GM12878 (cell line): ENCODE measurements at regions of chr13 and their contacts with region 1.

Region 1: GRCh38 chr13:32650705-32651311 is 64.6 kb downstream of the PDS5B start:
- DNase-seq: peak; percentile 30
- ATAC-seq: peak; percentile 84
- H3K4me3 ChIP-seq: no peak overlapping the region
- H3K27ac ChIP-seq: no peak overlapping the region; the same call in 1 of the 2 replicates
- H3K4me1 ChIP-seq: peaks cover 20% of the 10 kb centered on the region
- H3K27me3 ChIP-seq: no peaks in the 10 kb centered on the region
- CTCF ChIP-seq: peak; percentile 78 to 88 (median 83)
- EP300 ChIP-seq: no peak
- POLR2A ChIP-seq: no peak
- RAD21 ChIP-seq: peak; percentile 71

Region 2: DNA sequence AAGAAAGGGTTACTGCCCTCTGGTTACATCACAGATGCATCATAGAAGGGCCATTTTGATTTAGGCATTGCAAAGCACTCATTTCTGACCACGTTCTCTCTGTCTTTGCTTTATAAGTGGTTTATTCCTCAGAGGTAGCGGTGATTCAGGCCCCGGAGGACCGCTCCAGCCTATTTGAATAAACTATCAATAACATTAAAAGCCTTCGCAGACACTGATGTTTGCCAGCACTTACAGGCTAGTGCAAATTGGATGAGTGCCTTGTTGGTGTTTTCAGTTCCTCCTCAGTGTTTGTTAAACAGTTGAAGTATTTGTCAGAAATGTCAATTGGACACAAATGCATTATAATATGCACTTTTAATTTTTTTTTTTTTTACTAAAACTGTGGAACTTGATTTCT is 791.2 kb before region 1 on chr13:
- CTCF ChIA-PET with region 1: no interaction called
- POLR2A ChIA-PET with region 1: no interaction called
- RAD21 ChIA-PET with region 1: no interaction called
- SMC1A ChIA-PET with region 1: no interaction called
- in situ Hi-C with region 1: no loop called
- intact Hi-C with region 1: no loop called
- DNase-seq: no peak
- ATAC-seq: peak; percentile 73
- H3K4me3 ChIP-seq: no peak overlapping the region
- H3K27ac ChIP-seq: no peak overlapping the region
- H3K4me1 ChIP-seq: no peaks in the 10 kb centered on the region
- H3K27me3 ChIP-seq: no peaks in the 10 kb centered on the region
- CTCF ChIP-seq: no peak
- EP300 ChIP-seq: no peak; a peak in 1 of 4 replicates
- POLR2A ChIP-seq: no peak
- RAD21 ChIP-seq: no peak

Region 3: DNA sequence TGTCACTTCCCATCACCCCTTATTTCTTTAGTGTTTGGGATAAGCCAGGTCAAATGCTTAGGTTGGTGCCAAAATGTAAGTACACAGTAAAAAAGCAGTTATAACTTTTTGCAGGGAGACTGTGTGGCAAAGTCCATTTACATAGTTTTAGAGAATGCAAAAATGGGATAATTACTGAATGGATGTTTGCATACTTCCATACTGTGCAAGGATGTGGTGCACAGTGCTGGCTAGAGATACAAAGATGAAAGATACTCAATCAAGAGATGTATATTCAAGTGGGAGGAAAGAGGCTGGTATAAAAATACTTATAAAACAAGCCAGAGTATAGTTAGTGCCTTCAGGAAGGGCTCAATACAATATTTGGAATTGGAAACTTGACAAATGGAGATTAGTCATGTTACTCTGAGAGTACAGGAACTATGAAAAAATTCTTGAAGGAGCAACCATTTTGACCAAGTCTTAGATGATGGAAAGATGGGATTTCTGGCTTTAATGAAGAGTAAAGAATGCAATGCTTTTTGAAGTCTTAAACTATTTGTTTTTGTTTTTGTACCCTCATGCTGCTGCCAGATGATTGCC is 56.6 kb before region 1 on chr13:
- CTCF ChIA-PET with region 1: interaction called, 171 read pairs
- POLR2A ChIA-PET with region 1: interaction called, 3 read pairs
- RAD21 ChIA-PET with region 1: interaction called, 112 read pairs
- SMC1A ChIA-PET with region 1: interaction called, 111 read pairs
- in situ Hi-C with region 1: no loop called
- intact Hi-C with region 1: no loop called
- DNase-seq: no peak
- ATAC-seq: no peak
- H3K4me3 ChIP-seq: no peak overlapping the region
- H3K27ac ChIP-seq: no peak overlapping the region
- H3K4me1 ChIP-seq: no peaks in the 10 kb centered on the region
- H3K27me3 ChIP-seq: no peaks in the 10 kb centered on the region
- CTCF ChIP-seq: no peak
- EP300 ChIP-seq: no peak
- POLR2A ChIP-seq: no peak
- RAD21 ChIP-seq: no peak

Region 4: DNA sequence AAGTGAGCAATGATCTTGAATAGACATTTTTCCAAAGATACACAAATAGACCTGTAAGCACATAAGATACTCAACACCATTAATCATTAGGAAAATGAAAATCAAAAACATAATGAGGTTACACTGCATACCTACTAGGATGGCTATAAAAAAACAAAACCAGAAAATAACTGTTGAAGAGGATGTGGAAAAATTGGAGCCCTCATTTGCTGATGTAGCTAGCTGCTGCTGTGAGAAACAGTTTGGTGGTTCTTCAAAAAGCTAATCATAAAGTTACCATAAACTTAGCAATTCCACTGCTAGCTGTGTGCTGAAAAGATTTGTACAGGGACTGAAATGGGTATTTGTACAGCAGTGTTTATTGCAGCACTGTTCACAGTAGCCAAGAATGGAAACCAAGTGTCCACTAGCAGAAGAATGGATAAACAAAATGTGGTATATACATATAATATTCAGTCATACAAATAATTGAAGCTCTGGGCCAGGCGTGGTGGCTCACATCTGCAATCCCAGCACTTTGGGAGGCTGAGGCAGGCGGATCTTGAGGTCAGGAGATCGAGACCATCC is 18.4 kb before region 1 on chr13:
- CTCF ChIA-PET with region 1: interaction called, 16 read pairs
- POLR2A ChIA-PET with region 1: interaction called, 3 read pairs
- RAD21 ChIA-PET with region 1: interaction called, 8 read pairs
- SMC1A ChIA-PET with region 1: interaction called, 5 read pairs
- in situ Hi-C with region 1: no loop called
- intact Hi-C with region 1: no loop called
- DNase-seq: no peak
- ATAC-seq: no peak
- H3K4me3 ChIP-seq: no peak overlapping the region
- H3K27ac ChIP-seq: no peak overlapping the region
- H3K4me1 ChIP-seq: no peaks in the 10 kb centered on the region
- H3K27me3 ChIP-seq: no peaks in the 10 kb centered on the region
- CTCF ChIP-seq: no peak
- EP300 ChIP-seq: no peak
- POLR2A ChIP-seq: no peak
- RAD21 ChIP-seq: no peak

Region 5: GRCh38 chr13:32639502-32640105 is 11.2 kb before region 1 on chr13:
- CTCF ChIA-PET with region 1: interaction called, 76 read pairs
- POLR2A ChIA-PET with region 1: no interaction called
- RAD21 ChIA-PET with region 1: interaction called, 30 read pairs
- SMC1A ChIA-PET with region 1: interaction called, 25 read pairs
- in situ Hi-C with region 1: no loop called
- intact Hi-C with region 1: no loop called
- DNase-seq: peak; percentile 15
- ATAC-seq: peak; percentile 91
- H3K4me3 ChIP-seq: no peak overlapping the region
- H3K27ac ChIP-seq: no peak overlapping the region
- H3K4me1 ChIP-seq: peaks cover 9% of the 10 kb centered on the region
- H3K27me3 ChIP-seq: no peaks in the 10 kb centered on the region
- CTCF ChIP-seq: peak; percentile 74 to 83 (median 75)
- EP300 ChIP-seq: no peak
- POLR2A ChIP-seq: no peak
- RAD21 ChIP-seq: peak; percentile 73

Region 6: GRCh38 chr13:32669030-32669646 is 18.3 kb after region 1 on chr13:
- CTCF ChIA-PET with region 1: interaction called, 90 read pairs
- POLR2A ChIA-PET with region 1: no interaction called
- RAD21 ChIA-PET with region 1: interaction called, 4 read pairs
- SMC1A ChIA-PET with region 1: interaction called, 31 read pairs
- in situ Hi-C with region 1: no loop called
- intact Hi-C with region 1: no loop called
- DNase-seq: no peak
- ATAC-seq: peak; percentile 78
- H3K4me3 ChIP-seq: no peak overlapping the region
- H3K27ac ChIP-seq: no peak overlapping the region
- H3K4me1 ChIP-seq: no peaks in the 10 kb centered on the region
- H3K27me3 ChIP-seq: no peaks in the 10 kb centered on the region
- CTCF ChIP-seq: peak; percentile 57 to 65 (median 58); a peak in 5 of 6 replicates
- EP300 ChIP-seq: no peak
- POLR2A ChIP-seq: no peak
- RAD21 ChIP-seq: peak; percentile 68

Region 7: GRCh38 chr13:33017323-33017929 is 366.6 kb after region 1 on chr13:
- CTCF ChIA-PET with region 1: interaction called, 3 read pairs
- POLR2A ChIA-PET with region 1: no interaction called
- RAD21 ChIA-PET with region 1: interaction called, 7 read pairs
- SMC1A ChIA-PET with region 1: interaction called, 12 read pairs
- in situ Hi-C with region 1: no loop called
- intact Hi-C with region 1: loop called (anchors 5 kb)
- DNase-seq: peak; percentile 65
- ATAC-seq: peak; percentile 88
- H3K4me3 ChIP-seq: peak overlapping the region; percentile 69
- H3K27ac ChIP-seq: no peak overlapping the region
- H3K4me1 ChIP-seq: peaks cover 12% of the 10 kb centered on the region
- H3K27me3 ChIP-seq: peaks cover 0 to 6% of the 10 kb centered on the region in 2 experiments; a peak in 1 of 4 replicates
- CTCF ChIP-seq: peak; percentile 66 to 82 (median 74); a peak in 5 of 6 replicates
- EP300 ChIP-seq: peak in 1 of 2 experiments; percentile 24; a peak in 1 of 4 replicates
- POLR2A ChIP-seq: no peak
- RAD21 ChIP-seq: peak; percentile 83